GM12878 (cell line): ENCODE measurements at regions of chr20 and their contacts with region 1.

Region 1: GRCh38 chr20:59770270-59770669 is 163.2 kb downstream of the SYCP2 start:
- DNase-seq: no peak
- ATAC-seq: no peak
- H3K4me3 ChIP-seq: no peak overlapping the region
- H3K27ac ChIP-seq: no peak overlapping the region
- H3K4me1 ChIP-seq: no peaks in the 10 kb centered on the region; the same call in 1 of the 2 replicates
- H3K27me3 ChIP-seq: no peaks in the 10 kb centered on the region
- CTCF ChIP-seq: no peak
- EP300 ChIP-seq: no peak
- POLR2A ChIP-seq: no peak
- RAD21 ChIP-seq: no peak

Region 2: DNA sequence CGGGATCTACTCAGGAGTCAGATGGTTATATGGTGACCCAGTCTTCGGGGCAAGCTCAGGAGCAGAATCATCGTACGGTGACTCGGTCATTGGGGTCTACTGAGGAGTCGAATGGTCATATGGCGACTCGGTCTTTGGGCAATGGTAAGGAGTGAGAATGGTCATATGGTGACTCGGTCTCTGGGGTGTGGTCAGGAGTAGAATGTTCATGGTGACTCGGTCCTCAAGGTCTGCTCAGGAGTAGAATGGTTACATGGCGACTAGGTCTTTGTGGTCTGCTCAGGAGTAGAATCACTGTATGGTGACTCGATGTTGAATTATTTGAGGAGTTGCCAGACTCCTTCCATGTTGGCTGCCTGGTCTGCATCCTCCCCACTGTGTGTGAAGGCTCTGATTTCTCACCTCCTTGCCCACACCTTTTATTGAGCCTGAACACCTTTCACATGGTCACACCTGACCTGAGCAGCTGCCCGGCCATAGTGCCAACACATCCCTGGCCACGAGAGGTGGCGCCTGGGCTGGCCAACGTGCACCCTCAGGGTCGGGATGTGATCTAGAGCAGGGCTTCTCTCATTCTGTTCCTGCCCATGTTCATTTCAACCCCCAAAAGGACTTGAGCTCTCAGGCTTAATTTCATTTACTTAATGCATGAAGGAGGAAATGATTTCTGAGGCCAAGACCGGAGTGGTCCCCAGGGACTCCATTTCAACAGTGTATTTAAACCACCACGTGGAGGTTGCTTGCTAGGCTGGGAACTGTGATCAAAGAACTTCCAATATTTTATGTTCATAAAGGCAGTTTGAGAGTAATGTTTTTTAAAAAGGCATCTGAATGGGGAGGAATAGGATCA is 46.4 kb before region 1 on chr20:
- CTCF ChIA-PET with region 1: no interaction called
- POLR2A ChIA-PET with region 1: no interaction called
- RAD21 ChIA-PET with region 1: no interaction called
- SMC1A ChIA-PET with region 1: no interaction called
- in situ Hi-C with region 1: loop called (anchors 5 kb)
- intact Hi-C with region 1: no loop called
- DNase-seq: no peak
- ATAC-seq: no peak
- H3K4me3 ChIP-seq: no peak overlapping the region
- H3K27ac ChIP-seq: no peak overlapping the region
- H3K4me1 ChIP-seq: peaks cover 4% of the 10 kb centered on the region
- H3K27me3 ChIP-seq: no peaks in the 10 kb centered on the region
- CTCF ChIP-seq: no peak
- EP300 ChIP-seq: no peak
- POLR2A ChIP-seq: no peak
- RAD21 ChIP-seq: no peak

Region 3: GRCh38 chr20:59789686-59790085 is 19.4 kb after region 1 on chr20:
- CTCF ChIA-PET with region 1: no interaction called
- POLR2A ChIA-PET with region 1: no interaction called
- RAD21 ChIA-PET with region 1: no interaction called
- SMC1A ChIA-PET with region 1: no interaction called
- in situ Hi-C with region 1: no loop called
- intact Hi-C with region 1: no loop called
- DNase-seq: no peak
- ATAC-seq: no peak
- H3K4me3 ChIP-seq: no peak overlapping the region
- H3K27ac ChIP-seq: no peak overlapping the region
- H3K4me1 ChIP-seq: no peaks in the 10 kb centered on the region
- H3K27me3 ChIP-seq: no peaks in the 10 kb centered on the region
- CTCF ChIP-seq: no peak
- EP300 ChIP-seq: no peak
- POLR2A ChIP-seq: no peak
- RAD21 ChIP-seq: no peak